ENCODE measurements at regions of chr10 and their contacts with region 1.

Region 1: DNA sequence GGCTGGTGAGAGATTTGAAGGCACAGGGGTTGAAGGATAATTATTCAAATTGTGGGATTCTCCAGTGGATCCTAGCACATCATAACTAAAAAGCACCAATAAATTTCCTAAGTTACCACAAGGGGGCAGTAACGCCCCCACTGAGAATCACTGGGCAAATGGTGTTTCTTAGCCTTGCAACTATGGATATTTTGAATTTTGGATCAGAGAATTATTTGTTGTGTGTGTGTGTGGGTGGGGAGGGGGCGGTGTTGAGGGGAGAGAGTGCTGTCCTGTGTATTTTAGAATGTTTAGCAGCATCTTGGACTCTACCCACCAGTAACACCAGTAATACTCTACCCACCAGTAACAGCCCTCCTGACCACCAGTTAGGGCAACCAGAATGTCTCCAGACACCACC is 63.3 kb upstream of the PRKG1 start:
- DNase-seq: peak in 1 of 2 donors; percentile 59
- ATAC-seq: peak in 2 of 3 donors; percentile 37 to 52
- H3K4me3 ChIP-seq: no peak overlapping the region
- H3K4me3 Mint-ChIP-seq: no peak overlapping the region
- H3K27ac ChIP-seq: no peak overlapping the region
- H3K27ac Mint-ChIP-seq: no peak overlapping the region
- H3K4me1 ChIP-seq: no peaks in the 10 kb centered on the region
- H3K4me1 Mint-ChIP-seq: no peaks in the 10 kb centered on the region
- H3K27me3 ChIP-seq: no peaks in the 10 kb centered on the region
- H3K27me3 Mint-ChIP-seq: no peaks in the 10 kb centered on the region
- CTCF ChIP-seq: peak; percentile 70

Region 2: DNA sequence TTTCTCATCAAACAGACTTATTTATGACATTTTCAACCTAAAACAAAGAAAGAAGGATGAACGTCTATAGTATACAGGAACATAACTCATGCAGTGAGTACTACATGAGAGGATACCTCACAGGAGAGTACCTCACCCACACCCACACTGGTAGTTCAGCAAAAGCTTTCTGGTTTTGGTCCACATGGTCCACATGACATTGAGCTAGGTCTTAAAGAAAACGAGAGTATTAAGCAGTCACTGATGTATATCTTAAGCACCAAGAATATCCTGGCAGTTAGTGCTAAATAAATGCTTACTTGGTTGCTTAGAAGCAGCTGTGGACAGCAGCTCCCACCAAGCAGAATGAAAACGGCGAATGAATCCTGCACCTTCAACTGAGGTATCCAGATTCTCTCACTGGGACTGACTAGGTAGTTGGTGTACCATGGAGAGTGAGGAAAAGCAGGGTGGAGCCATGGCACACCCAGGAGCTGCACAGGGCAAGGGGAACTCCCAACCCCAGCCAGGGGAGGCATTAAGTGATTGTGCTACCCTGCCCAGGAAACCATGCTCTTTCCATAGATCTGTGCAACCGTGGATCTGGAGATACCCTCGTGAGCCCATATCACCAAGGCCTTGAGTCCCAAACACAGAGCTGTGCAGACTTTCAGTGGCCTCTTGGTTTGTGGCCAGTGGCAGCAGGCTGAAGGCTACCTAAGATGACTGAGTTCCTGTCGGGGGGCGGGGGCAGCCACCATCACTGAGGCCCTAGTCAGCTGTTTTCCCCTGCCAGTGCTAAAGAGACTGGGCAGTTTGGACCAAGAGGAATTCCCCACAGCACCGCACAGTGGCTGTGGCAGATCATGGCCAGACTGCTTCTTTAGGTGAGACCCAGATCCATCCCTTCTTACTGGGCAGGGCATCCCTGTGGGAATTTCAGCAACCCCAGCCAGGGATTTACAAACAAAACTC is 530.6 kb before region 1 on chr10:
- intact Hi-C with region 1: no loop called
- DNase-seq: no peak
- ATAC-seq: no peak
- H3K4me3 ChIP-seq: no peak overlapping the region
- H3K4me3 Mint-ChIP-seq: no peak overlapping the region
- H3K27ac ChIP-seq: no peak overlapping the region
- H3K27ac Mint-ChIP-seq: no peak overlapping the region
- H3K4me1 ChIP-seq: no peaks in the 10 kb centered on the region
- H3K4me1 Mint-ChIP-seq: peaks cover 25 to 26% of the 10 kb centered on the region in 2 donors
- H3K27me3 ChIP-seq: no peaks in the 10 kb centered on the region
- H3K27me3 Mint-ChIP-seq: no peaks in the 10 kb centered on the region
- CTCF ChIP-seq: no peak

Region 3: DNA sequence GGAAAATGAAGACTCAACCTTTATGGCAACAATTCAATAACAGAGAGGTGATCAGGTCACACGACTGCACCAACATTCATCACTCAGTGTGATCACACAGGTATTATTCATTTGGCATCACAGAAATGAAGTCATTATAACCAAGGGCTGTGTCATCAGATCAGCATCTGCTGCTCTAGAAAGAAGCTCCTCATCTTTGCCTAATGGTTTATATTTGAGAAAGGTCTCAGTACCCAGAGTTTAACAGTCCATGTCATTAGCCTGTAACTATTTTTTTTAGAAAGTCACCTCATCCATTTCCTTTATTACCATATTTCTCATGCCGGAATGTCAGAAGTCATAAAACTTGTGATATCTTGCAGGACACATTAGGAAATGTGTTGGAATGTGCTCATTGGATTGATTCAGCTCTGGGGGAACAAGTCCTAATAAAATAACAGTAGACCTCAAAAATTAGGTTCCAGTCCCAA is 18.2 kb after region 1 on chr10:
- intact Hi-C with region 1: no loop called
- DNase-seq: no peak
- ATAC-seq: no peak
- H3K4me3 ChIP-seq: no peak overlapping the region
- H3K4me3 Mint-ChIP-seq: no peak overlapping the region
- H3K27ac ChIP-seq: no peak overlapping the region
- H3K27ac Mint-ChIP-seq: no peak overlapping the region
- H3K4me1 ChIP-seq: no peaks in the 10 kb centered on the region
- H3K4me1 Mint-ChIP-seq: no peaks in the 10 kb centered on the region
- H3K27me3 ChIP-seq: no peaks in the 10 kb centered on the region
- H3K27me3 Mint-ChIP-seq: no peaks in the 10 kb centered on the region
- CTCF ChIP-seq: no peak

Region 4: GRCh38 chr10:51422311-51423120 is 411.5 kb after region 1 on chr10:
- intact Hi-C with region 1: loop called (anchors 1 kb)
- DNase-seq: peak; percentile 29 to 57
- ATAC-seq: peak in 2 of 3 donors; percentile 78 to 91
- H3K4me3 ChIP-seq: no peak overlapping the region
- H3K4me3 Mint-ChIP-seq: no peak overlapping the region
- H3K27ac ChIP-seq: no peak overlapping the region
- H3K27ac Mint-ChIP-seq: no peak overlapping the region
- H3K4me1 ChIP-seq: no peaks in the 10 kb centered on the region
- H3K4me1 Mint-ChIP-seq: peaks cover 6% of the 10 kb centered on the region in 2 donors
- H3K27me3 ChIP-seq: no peaks in the 10 kb centered on the region
- H3K27me3 Mint-ChIP-seq: peaks cover 5 to 10% of the 10 kb centered on the region in 2 donors
- CTCF ChIP-seq: peak; percentile 73

Region 5: DNA sequence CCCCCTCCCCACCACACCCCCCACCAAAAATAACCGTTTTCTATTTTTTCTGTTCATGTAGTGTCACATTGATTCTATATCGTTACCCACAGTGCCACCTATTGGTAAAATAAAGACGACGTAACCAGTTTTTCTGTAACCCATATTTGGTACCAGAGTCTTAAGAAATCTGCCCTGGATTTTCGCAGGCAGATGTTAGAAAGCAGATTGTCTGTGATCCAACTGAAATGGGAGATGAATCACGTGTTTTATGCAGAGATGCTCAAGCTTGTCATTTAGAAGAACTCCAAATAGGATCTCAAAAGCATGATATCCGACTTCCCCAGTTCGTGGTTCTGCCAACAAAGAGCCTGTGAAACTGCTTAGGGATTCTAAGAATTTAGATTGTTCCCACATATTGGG is 949.5 kb after region 1 on chr10:
- intact Hi-C with region 1: loop called (anchors 2 kb)
- DNase-seq: peak in 1 of 2 donors; percentile 44
- ATAC-seq: no peak
- H3K4me3 ChIP-seq: no peak overlapping the region
- H3K4me3 Mint-ChIP-seq: no peak overlapping the region
- H3K27ac ChIP-seq: no peak overlapping the region
- H3K27ac Mint-ChIP-seq: no peak overlapping the region
- H3K4me1 ChIP-seq: no peaks in the 10 kb centered on the region
- H3K4me1 Mint-ChIP-seq: no peaks in the 10 kb centered on the region
- H3K27me3 ChIP-seq: no peaks in the 10 kb centered on the region
- H3K27me3 Mint-ChIP-seq: no peaks in the 10 kb centered on the region
- CTCF ChIP-seq: peak; percentile 37

Region 6: DNA sequence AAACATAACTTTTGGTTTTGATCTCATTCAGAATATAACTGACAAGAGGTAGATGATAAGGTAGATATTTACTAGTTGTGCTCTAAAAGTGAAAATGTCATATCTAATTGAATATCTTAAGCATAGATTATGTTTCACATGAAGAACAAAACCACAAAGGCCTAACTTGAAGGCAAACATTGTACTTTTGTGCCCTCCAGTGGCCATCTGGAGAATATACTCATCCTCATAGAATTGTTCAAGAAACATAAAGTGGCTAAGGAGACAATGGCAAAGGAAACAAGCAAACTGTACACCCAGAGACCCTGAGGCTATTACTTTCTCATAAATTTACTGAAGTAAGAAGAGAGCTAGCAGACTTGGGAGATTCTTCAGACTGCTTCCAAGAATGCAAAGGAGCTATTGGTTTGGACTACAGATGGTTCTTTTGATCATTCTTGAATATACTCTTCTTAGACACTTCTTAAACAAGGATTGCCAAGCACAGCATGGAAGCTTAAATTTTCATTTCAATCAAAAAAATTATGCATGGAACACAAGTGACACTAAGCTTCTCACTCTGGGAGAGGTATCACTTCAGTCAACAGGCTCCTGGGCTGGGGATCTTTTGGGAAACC is 1204.9 kb after region 1 on chr10:
- intact Hi-C with region 1: loop called (anchors 1 kb)
- DNase-seq: peak in 1 of 2 donors; percentile 71
- ATAC-seq: peak; percentile 66 to 81 (median 68)
- H3K4me3 ChIP-seq: no peak overlapping the region
- H3K4me3 Mint-ChIP-seq: no peak overlapping the region
- H3K27ac ChIP-seq: no peak overlapping the region
- H3K27ac Mint-ChIP-seq: no peak overlapping the region
- H3K4me1 ChIP-seq: no peaks in the 10 kb centered on the region
- H3K4me1 Mint-ChIP-seq: no peaks in the 10 kb centered on the region
- H3K27me3 ChIP-seq: no peaks in the 10 kb centered on the region
- H3K27me3 Mint-ChIP-seq: no peaks in the 10 kb centered on the region
- CTCF ChIP-seq: peak; percentile 68